Sciatic nerve (tissue), 2 donors: ENCODE measurements at regions of chr3 and their contacts with region 1.

Region 1: DNA sequence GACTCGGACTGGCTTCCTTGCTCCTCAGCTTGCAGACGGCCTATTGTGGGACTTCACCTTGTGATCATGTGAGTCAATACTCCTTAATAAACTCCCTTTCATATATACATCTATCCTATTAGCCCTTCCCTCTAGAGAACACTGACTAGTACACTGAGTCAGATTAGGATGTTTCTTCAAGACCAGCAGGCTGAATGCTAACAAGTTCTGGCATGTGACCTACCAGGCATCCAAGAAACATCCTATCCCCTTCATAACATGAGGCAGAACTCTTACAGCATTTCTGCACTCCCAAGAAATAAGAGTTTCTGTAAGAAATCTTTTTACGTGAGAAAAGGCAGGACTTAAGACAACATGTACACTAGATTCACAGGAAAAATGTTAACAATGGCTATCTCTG is 9.3 kb downstream of the CFAP92 start:
- DNase-seq: no peak
- ATAC-seq: no peak

Region 2: DNA sequence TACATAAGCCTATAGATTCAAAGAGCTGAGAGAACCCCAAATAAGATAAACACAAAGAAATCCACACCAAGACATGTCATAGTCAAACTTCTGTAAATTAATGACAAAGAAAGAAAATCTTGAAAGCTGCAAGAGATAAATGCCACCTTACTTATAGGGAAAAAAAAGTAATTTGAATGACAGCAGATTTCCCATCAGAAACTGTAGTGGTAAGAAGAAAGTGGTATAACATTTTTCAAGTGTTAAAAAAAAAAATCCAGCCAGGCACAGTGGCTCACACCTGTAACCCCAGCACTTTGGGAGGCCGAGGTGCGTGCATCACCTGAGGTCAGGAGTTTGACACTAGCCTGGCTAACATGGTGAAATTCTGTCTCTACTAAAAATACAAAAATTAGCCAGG is 28.2 kb before region 1 on chr3:
- intact Hi-C with region 1: no loop called
- DNase-seq: no peak
- ATAC-seq: no peak

Region 3: DNA sequence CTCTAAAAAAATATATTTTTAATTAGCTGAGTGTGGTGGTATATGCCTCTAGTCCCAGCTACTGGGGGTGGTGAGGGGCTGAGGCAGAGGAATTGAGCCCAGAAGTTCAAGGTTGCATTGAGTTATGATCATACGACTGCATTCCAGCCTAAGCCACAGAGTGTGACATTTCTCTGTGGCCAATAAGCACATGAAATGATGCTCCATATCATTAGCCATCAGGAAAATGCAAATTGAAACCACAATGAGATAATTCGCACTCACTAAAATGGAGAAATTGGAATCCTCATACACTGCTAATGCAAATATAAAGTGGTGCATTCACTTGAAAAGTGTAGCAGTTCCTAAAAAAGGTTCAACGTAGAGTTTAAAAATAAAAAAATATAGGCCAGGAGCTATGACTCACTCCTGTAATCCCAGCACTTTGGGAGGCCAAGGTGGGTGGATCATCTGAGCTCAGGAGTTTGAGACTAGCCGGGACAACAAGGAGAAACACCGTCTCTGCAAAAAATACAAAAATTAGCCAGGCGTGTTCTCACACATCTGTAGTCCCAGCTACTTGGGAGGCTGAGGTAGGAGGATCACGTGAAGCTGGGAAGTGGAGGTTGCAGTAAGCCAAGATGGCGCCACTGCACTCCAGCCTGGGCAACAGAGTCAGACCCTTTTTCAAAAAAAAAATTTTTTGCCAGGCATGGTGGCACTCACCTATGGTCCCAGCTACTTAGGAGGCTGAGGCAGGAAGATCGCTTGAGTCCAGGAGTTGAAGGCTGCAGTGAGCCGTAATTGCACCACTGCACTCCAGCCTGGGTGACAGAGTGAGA is 490.6 kb after region 1 on chr3:
- intact Hi-C with region 1: loop called (anchors 10 kb)
- DNase-seq: no peak
- ATAC-seq: no peak